Psoas muscle (tissue), 8 donors: ENCODE measurements at regions of chr6 and their contacts with region 1.

Region 1: DNA sequence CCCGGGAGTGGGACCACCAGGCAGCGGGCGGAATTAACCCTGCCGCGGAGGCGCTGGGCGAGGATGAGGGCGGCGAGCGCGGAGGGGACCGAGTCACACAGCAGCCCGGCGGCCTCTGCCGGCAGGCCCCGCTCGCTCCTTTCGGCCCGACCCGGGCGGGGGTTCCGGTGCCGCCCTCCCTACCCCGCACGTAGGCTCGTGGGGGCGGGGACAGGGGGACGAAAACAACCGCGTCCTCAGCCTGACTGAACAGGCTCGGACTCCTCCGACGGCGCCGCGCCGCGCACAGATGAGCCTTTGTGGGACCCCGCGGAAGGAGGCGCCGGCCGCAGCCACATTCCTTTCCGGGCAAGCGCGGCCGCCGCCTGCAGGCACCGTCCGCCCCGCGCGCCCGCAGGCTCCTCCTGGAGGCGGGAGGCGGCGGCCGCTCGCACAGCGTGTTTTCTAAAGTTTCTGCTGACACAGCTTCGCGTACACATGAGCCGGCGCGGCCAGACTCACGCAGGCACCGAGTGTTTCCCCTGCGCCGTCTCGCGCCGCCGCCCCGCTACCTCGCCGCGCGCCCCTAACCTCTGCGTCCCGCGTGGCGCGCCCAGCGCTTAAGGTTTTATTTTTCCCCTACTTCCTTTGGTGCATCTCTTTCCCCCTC is 244.3 kb downstream of the ARID1B start:
- DNase-seq: peak; percentile 94 to 95
- ATAC-seq: peak; percentile 84 to 90 (median 88)
- H3K4me3 ChIP-seq: peak overlapping the region; percentile 84
- H3K27ac ChIP-seq: peak overlapping the region; percentile 100
- H3K4me1 ChIP-seq: peaks cover 48% of the 10 kb centered on the region
- H3K27me3 ChIP-seq: no peaks in the 10 kb centered on the region
- CTCF ChIP-seq: peak; percentile 53

Region 2: GRCh38 chr6:155327326-155328073 is 1694.0 kb before region 1 on chr6:
- intact Hi-C with region 1: loop called in 1 of 2 experiments (anchors 10 kb)
- DNase-seq: peak; percentile 29 to 65
- ATAC-seq: peak; percentile 65 to 93 (median 73)
- H3K4me3 ChIP-seq: no peak overlapping the region
- H3K27ac ChIP-seq: no peak overlapping the region
- H3K4me1 ChIP-seq: peaks cover 5% of the 10 kb centered on the region
- H3K27me3 ChIP-seq: no peaks in the 10 kb centered on the region
- CTCF ChIP-seq: peak; percentile 92

Region 3: DNA sequence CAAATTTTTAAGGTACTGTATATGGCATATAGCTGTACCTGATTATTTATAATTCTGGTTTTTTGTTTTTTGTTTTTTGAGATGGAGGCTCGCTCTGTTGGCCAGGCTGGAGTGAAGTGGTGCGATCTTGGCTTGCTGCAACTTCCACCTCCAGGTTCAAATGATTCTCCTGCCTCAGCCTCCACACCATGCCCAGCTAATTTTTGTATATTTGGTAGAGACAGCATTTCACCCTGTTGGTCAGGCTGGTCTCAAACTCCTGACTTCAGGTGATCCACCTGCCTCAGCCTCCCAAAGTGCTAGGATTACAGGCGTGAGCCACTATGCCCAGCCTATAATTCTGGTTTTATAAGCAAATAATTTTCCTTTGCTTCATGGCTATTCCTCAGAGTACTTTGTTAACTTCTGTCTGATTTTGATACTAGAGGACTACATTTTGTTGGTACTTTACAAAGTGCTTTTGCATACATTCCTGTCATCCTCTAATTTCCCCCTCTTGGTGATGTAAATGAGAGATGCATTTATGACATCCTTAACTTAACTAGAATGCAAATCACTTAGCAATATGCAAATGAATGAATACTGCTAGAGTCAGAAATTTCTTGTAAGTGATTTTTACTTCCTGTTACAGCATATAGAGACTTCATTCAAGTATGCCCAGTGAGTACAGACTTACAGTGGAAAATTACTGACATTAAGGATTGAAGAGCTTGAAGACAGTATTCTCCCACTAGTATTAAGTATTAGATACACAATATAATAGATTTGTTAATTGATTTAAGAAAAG is 280.0 kb before region 1 on chr6:
- intact Hi-C with region 1: no loop called
- DNase-seq: no peak
- ATAC-seq: no peak
- H3K4me3 ChIP-seq: no peak overlapping the region
- H3K27ac ChIP-seq: no peak overlapping the region
- H3K4me1 ChIP-seq: no peaks in the 10 kb centered on the region
- H3K27me3 ChIP-seq: no peaks in the 10 kb centered on the region
- CTCF ChIP-seq: no peak

Region 4: DNA sequence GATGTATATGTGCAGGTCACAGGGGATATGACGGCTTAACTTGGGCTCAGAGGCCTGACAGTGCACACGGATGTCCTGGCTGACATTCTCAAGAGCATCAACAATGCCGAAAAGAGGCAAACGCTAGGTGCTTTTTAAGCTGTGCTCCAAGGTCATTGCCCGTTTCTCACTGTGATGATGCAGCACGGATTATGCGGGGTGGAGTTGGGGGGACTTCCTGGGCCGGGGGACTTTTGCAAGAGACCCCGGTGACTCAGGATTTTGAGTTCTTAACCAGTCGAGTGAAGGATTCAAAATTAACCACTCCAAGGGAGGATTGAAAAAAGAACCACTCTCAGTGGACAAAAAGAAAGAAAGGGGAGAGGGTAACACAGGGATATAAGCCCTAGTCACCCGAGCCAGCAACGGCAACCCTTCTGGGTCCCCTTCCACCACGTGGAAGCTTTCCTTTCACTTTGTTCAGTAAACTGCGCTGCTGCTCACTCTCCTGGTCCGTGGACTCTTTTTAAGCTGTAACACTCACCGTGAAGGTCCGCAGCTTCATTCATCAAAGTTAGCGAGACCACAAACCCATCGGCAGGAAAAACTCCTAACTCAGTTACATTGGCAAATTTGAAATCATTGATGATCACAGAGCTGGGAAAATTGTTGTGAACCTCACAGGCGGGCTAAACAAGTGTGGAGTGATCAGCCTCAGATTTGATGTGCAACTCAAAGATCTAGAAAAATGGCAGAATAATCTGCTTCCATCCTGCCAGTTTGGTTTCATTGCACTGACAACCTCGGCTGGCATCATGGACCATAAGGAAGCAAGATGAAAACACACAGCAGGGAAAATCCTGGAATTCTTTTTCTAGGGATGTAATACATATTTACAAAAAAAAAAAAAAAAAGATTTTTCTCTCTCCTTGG is 45.0 kb before region 1 on chr6:
- intact Hi-C with region 1: loop called in 1 of 2 experiments (anchors 5 kb)
- DNase-seq: no peak
- ATAC-seq: peak in 3 of 4 donors; percentile 39 to 52 (median 48)
- H3K4me3 ChIP-seq: peak overlapping the region; percentile 58
- H3K27ac ChIP-seq: peak overlapping the region; percentile 61
- H3K4me1 ChIP-seq: peaks cover 78% of the 10 kb centered on the region
- H3K27me3 ChIP-seq: no peaks in the 10 kb centered on the region
- CTCF ChIP-seq: no peak

Region 5: GRCh38 chr6:157099912-157100593 is 78.6 kb after region 1 on chr6:
- intact Hi-C with region 1: no loop called
- DNase-seq: no peak
- ATAC-seq: no peak
- H3K4me3 ChIP-seq: no peak overlapping the region
- H3K27ac ChIP-seq: no peak overlapping the region
- H3K4me1 ChIP-seq: no peaks in the 10 kb centered on the region
- H3K27me3 ChIP-seq: no peaks in the 10 kb centered on the region
- CTCF ChIP-seq: no peak